ENCODE measurements at regions of chr6 and their contacts with region 1.

Region 1: DNA sequence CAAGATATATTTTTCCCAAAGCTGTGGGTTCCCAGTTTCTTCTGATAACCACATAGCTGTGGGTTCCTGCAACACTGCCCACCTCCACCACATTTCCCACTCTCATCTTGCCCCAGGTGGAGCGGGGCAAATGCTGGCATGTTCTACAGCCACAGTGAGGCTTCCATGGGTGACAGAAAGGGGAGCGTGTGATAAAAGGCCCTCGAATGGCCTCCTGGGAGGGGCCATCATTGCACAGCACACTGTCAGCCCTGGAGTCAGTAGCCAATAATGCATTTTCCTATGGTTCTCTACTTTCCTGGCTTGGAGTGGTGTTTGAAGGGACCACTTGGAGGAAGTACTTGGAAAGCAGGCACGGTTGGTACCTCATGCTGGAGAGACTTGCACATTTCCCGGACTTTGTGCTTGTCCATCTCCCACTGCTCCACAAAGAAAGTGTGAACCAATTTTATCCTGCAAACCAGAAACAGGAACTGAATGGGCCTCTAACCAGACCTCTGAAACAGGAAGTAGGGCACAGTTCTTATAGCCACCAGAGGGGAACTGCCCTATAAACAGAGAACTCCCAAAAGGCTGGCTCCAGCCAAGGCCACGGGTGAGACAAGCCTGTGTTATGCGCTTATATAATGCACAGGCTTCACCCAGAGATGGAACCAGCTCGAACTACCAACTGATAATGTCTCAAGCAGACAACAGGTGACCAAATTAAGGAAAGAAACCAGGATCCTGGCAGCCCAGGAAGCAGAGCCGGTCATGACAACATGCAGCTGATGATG is 8.6 kb downstream of the MAP3K5 start:
- DNase-seq: no peak
- ATAC-seq: no peak
- H3K4me3 Mint-ChIP-seq: peak overlapping the region; percentile 27
- H3K27ac Mint-ChIP-seq: peak overlapping the region; percentile 55
- H3K4me1 Mint-ChIP-seq: peaks cover 60% of the 10 kb centered on the region
- H3K27me3 Mint-ChIP-seq: no peaks in the 10 kb centered on the region

Region 2: GRCh38 chr6:136751522-136751956 is 32.1 kb before region 1 on chr6:
- CTCF ChIA-PET with region 1: interaction called, 3 read pairs
- POLR2A ChIA-PET with region 1: no interaction called
- intact Hi-C with region 1: loop called (anchors 1 to 2 kb)
- DNase-seq: peak; percentile 46
- ATAC-seq: peak; percentile 72
- H3K4me3 Mint-ChIP-seq: peak overlapping the region; percentile 42
- H3K27ac Mint-ChIP-seq: peak overlapping the region; percentile 63
- H3K4me1 Mint-ChIP-seq: peaks cover 68% of the 10 kb centered on the region
- H3K27me3 Mint-ChIP-seq: no peaks in the 10 kb centered on the region

Region 3: DNA sequence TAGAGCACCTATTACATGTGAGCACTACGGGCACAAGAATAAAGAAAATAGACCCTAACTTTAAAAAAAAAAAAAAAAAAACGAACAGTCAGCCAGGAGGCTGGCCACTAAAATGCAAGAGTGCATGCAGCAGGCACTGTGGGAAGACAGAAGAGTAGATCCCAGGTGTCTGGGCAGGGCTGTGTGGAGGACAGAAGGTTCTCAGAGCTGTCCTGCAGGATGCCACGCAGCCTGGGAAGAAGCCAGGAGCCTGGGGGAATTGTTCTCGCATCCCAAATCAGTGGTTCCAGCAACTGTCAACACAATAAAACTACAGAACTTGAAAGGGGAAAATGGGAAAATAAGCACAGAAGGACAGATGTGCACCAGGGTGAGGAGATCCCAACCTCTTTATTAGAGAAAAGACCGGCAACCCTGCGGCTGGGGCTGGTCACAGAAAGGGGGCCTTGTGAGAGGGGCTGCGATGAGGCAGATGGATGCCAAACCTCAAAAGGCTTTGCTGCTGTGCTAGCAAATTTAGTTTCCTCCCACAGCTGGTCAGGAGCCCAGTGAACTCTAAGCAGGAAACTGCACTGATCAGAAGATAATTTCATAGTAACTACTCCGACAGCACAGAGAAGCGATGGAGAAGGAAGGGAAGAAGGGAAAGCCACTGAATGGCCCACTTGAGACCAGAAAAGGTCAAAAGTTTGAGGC is 22.3 kb before region 1 on chr6:
- CTCF ChIA-PET with region 1: interaction called, 7 read pairs
- POLR2A ChIA-PET with region 1: no interaction called
- intact Hi-C with region 1: loop called in 1 of 2 experiments (anchors 2 kb)
- DNase-seq: peak; percentile 22
- ATAC-seq: peak; percentile 28
- H3K4me3 Mint-ChIP-seq: peak overlapping the region; percentile 18
- H3K27ac Mint-ChIP-seq: peak overlapping the region; percentile 35
- H3K4me1 Mint-ChIP-seq: peaks cover 61% of the 10 kb centered on the region
- H3K27me3 Mint-ChIP-seq: no peaks in the 10 kb centered on the region